ENCODE measurements at regions of chr5 and their contacts with region 1.

Region 1: GRCh38 chr5:55307383-55308253 is at the starts of genes DHX29 and MTREX:
- DNase-seq: peak; percentile 91
- H3K4me3 Mint-ChIP-seq: no peak within 1 kb of the TSS
- H3K27ac Mint-ChIP-seq: no peak within 1 kb of the TSS
- H3K4me1 Mint-ChIP-seq: peaks cover 22% of the 10 kb centered on the region
- H3K27me3 Mint-ChIP-seq: no peaks in the 10 kb centered on the region
- total RNA-seq, gene DHX29: 13.0 to 15.5 TPM
- total RNA-seq, gene MTREX: 69.7 to 71.4 TPM

Region 2: GRCh38 chr5:55172051-55172899 is 135.3 kb before region 1 on chr5:
- CTCF ChIA-PET with region 1: interaction called, 15 read pairs
- POLR2A ChIA-PET with region 1: no interaction called
- DNase-seq: peak; percentile 73
- H3K4me3 Mint-ChIP-seq: peak overlapping the region; percentile 77
- H3K27ac Mint-ChIP-seq: no peak overlapping the region
- H3K4me1 Mint-ChIP-seq: peaks cover 35% of the 10 kb centered on the region
- H3K27me3 Mint-ChIP-seq: peaks cover 71% of the 10 kb centered on the region

Region 3: GRCh38 chr5:55232985-55233928 is 74.4 kb before region 1 on chr5 and contains the start of gene CCNO:
- CTCF ChIA-PET with region 1: interaction called, 19 read pairs
- POLR2A ChIA-PET with region 1: interaction called, 5 read pairs
- DNase-seq: peak; percentile 64
- H3K4me3 Mint-ChIP-seq: peak within 1 kb of the TSS; percentile 69
- H3K27ac Mint-ChIP-seq: no peak within 1 kb of the TSS
- H3K4me1 Mint-ChIP-seq: peaks cover 30% of the 10 kb centered on the region
- H3K27me3 Mint-ChIP-seq: peaks cover 75% of the 10 kb centered on the region
- total RNA-seq, gene CCNO: 0.15 TPM in 1 of 2 experiments, not detected in the other